Breast epithelium (tissue), 4 donors: ENCODE measurements at regions of chr4 and their contacts with region 1.

Region 1: GRCh38 chr4:36099527-36099926 is 144.8 kb downstream of the ARAP2 start:
- DNase-seq: no peak
- H3K4me3 ChIP-seq: no peak overlapping the region
- H3K27ac ChIP-seq: no peak overlapping the region
- H3K4me1 ChIP-seq: no peaks in the 10 kb centered on the region
- H3K27me3 ChIP-seq: no peaks in the 10 kb centered on the region
- CTCF ChIP-seq: no peak
- POLR2A ChIP-seq: no peak

Region 2: GRCh38 chr4:36064147-36064546 is 35.4 kb before region 1 on chr4:
- intact Hi-C with region 1: no loop called
- DNase-seq: no peak
- H3K4me3 ChIP-seq: no peak overlapping the region
- H3K27ac ChIP-seq: no peak overlapping the region
- H3K4me1 ChIP-seq: no peaks in the 10 kb centered on the region
- H3K27me3 ChIP-seq: no peaks in the 10 kb centered on the region
- CTCF ChIP-seq: no peak
- POLR2A ChIP-seq: no peak

Region 3: DNA sequence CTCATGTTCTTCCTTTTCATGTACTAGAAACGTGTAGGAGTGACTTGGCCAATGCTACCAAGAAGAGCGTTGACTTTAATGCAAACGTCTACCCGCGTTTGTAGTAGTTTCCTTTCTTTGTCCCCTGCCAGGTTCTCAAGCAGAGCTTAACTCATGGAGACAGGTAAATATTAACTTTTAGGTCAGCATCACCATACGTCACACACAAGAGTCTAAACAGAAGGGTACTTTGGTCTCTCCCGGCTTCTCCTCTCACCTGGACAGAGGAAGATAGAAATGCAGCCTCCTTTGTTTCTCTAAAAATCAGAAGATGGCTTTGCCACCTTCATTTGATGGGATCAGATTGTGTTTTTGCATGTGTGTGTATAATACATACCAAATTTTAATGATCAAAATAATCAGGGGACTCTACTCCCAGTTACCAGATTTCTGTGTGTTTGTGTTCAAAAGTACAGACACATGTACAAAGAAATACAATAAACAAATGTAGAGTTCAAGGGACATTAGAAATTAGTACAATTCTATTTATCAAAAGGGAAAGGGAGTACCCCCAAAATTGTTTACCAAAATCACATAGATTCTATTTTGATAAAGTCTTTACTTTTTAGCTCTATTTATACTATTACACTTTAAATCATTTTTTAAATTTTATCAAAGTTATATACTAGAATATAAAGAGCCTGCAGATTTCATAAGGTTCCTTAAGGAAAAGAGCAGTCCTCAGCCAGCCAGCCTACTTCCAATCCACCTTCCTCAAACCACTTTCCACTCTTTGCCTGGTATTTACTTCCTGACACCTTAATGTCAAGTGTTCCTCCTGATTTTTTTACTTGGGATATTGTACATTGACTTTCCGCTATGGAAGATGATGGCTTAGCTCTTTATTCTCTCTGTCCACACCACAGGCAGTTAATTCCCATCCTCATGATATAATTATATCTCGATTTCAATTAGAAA is 1391.1 kb after region 1 on chr4:
- intact Hi-C with region 1: loop called (anchors 5 kb)
- DNase-seq: no peak
- H3K4me3 ChIP-seq: no peak overlapping the region
- H3K27ac ChIP-seq: no peak overlapping the region
- H3K4me1 ChIP-seq: peaks cover 0 to 3% of the 10 kb centered on the region in 2 donors
- H3K27me3 ChIP-seq: no peaks in the 10 kb centered on the region
- CTCF ChIP-seq: no peak
- POLR2A ChIP-seq: no peak